ENCODE measurements at regions of chr5 and their contacts with region 1.

Region 1: GRCh38 chr5:146426853-146427618 is 20.1 kb upstream of the TCERG1 start:
- H3K4me3 ChIP-seq: no peak overlapping the region
- H3K27ac ChIP-seq: no peak overlapping the region
- H3K4me1 ChIP-seq: 0 out of 2 replicates have a peak, but pooled peaks cover 3% of the 10 kb centered on the region
- CTCF ChIP-seq: peak; percentile 56

Region 2: GRCh38 chr5:146291421-146292074 is 135.5 kb before region 1 on chr5:
- CTCF ChIA-PET with region 1: interaction called, 19 read pairs
- POLR2A ChIA-PET with region 1: no interaction called
- H3K4me3 ChIP-seq: no peak overlapping the region
- H3K27ac ChIP-seq: no peak overlapping the region
- H3K4me1 ChIP-seq: peaks cover 7% of the 10 kb centered on the region
- CTCF ChIP-seq: no peak

Region 3: GRCh38 chr5:146340260-146341081 is 86.6 kb before region 1 on chr5:
- CTCF ChIA-PET with region 1: no interaction called
- POLR2A ChIA-PET with region 1: no interaction called
- H3K4me3 ChIP-seq: no peak overlapping the region
- H3K27ac ChIP-seq: no peak overlapping the region
- H3K4me1 ChIP-seq: no peaks in the 10 kb centered on the region
- CTCF ChIP-seq: no peak

Region 4: DNA sequence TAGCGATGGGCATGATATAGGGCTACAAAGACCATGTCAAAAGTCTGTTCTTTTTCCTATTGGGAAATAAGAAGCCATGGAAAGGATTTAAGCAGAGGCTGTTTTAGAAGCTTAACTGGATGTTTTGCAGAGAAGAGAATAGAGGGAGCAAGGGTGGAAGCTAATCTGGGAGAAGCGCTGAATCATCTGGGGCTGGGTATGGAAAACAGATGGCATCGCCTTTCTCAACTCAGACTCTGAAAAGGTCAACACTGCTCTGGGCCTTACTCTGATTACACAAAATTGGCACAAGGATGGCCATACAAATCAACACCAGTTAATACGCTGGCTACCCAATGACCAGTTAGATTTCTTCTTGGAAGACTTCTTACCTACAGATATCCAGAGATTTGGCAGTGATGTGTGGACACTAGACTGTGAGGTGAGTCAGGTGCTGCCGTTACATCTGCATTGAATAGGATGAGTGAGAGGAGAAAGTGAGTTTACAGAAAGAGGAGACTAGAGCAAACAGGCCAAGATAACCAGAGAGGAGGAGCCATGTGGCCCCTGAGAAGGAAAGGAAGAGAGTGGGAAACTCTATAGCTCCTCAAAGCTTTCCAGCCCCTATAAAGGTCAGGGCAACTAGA is 13.9 kb after region 1 on chr5:
- CTCF ChIA-PET with region 1: interaction called, 10 read pairs
- POLR2A ChIA-PET with region 1: no interaction called
- H3K4me3 ChIP-seq: no peak overlapping the region
- H3K27ac ChIP-seq: no peak overlapping the region
- H3K4me1 ChIP-seq: no peaks in the 10 kb centered on the region
- CTCF ChIP-seq: no peak

Region 5: DNA sequence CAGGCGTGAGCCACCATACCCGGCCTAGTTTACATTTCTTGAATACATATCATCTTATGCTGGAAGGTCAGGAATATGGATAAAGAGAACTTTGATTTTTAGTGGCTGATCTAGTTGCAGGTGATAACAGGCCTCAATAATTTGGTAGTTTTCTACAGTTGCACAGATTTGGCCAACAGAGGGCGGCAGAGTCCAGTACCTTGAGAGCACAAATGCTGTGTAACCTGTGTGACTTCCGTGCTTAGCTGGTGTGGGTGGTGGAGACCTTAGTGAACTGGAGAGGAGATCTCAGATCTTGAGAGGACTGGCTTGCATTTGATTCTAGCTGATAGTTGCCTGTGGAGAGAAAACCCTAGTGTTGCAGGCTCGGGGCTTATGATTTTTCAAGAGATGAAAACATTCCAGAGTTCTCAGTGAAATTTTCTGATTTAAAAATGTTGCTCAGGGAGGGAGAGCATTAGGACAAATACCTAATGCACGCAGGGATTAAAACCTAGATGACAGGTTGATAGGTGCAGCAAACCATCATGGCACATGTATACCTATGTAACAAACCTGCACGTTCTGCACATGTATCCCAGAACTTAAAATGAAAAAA is 106.3 kb after region 1 on chr5:
- CTCF ChIA-PET with region 1: no interaction called
- POLR2A ChIA-PET with region 1: no interaction called
- H3K4me3 ChIP-seq: no peak overlapping the region
- H3K27ac ChIP-seq: no peak overlapping the region
- H3K4me1 ChIP-seq: no peaks in the 10 kb centered on the region
- CTCF ChIP-seq: peak; percentile 70; the same call in 1 of the 2 replicates

Region 6: GRCh38 chr5:146553435-146553834 is 126.4 kb after region 1 on chr5:
- CTCF ChIA-PET with region 1: no interaction called
- POLR2A ChIA-PET with region 1: no interaction called
- H3K4me3 ChIP-seq: no peak overlapping the region
- H3K27ac ChIP-seq: no peak overlapping the region
- H3K4me1 ChIP-seq: no peaks in the 10 kb centered on the region
- CTCF ChIP-seq: no peak

Region 7: DNA sequence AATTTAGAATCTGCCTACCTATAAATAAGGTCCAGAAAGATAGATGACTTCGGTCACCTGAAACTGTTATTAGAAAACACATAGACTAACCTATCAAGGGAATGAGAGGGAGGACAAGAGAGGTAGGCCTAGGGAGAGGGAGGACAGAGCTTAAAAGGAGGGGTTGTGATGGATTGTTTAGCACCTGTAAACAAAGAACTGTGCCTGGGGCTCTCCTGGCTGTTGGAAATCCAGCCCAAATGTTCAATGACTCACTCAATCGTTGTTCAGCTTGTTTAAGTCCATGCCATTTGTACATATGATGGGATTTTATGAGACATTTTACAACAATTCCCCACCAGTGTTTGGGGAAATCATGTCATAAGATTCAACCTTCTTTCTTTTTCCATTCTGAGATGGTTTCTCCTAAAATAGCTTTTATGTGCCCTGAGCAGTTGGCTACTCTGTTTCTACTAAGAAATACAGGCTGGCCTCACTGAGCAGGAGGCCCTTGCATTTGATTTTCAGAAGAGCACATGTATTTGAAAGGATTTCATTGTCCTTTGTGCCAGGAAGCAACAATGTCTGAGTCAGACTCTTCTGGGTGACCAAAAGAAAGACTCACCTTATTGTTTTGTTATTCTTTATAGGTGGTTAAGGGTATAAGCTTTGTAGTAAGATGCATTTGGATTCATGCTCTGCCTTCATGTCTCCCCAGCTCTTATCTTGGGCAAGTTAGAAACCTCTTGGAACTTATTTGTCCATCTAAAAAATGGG is 137.1 kb after region 1 on chr5:
- CTCF ChIA-PET with region 1: no interaction called
- POLR2A ChIA-PET with region 1: no interaction called
- H3K4me3 ChIP-seq: no peak overlapping the region
- H3K27ac ChIP-seq: no peak overlapping the region
- H3K4me1 ChIP-seq: no peaks in the 10 kb centered on the region
- CTCF ChIP-seq: no peak

Measured in HEK293 (cell line).